MCF 10A (cell line): ENCODE measurements at regions of chr2 and their contacts with region 1.

Region 1: DNA sequence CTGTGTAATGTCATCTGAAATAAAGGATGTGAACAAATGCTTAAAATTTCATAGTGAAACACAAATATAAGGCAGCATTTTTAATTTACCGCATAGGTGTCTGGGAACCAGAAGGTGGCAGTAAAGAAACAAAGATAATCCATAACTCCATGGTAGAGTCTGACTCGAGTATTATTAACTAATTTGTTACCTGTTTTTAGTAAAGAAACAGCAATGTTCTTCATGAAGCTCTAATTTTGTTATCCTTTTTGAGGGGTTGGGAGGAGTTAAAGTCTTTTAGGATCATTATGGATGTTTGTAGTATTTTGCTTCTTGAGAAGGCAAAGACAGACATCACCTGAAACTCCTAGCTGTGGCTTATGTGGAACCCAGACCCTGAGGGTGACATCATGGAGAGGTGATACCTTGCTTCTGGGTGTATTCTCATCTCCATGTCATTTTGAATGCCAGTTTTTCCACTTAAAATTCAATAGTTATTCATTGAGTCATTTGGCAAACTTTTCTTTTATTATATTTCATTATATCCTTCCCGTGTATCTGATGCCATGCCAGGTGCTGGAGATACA is 286.2 kb upstream of the EPAS1 start:
- DNase-seq: peak; percentile 50
- H3K4me3 Mint-ChIP-seq: no peak overlapping the region
- H3K27ac Mint-ChIP-seq: no peak overlapping the region
- H3K4me1 Mint-ChIP-seq: no peaks in the 10 kb centered on the region
- H3K27me3 Mint-ChIP-seq: no peaks in the 10 kb centered on the region
- CTCF ChIP-seq: peak; percentile 54

Region 2: GRCh38 chr2:46023165-46023854 is 12.3 kb after region 1 on chr2:
- CTCF ChIA-PET with region 1: interaction called, 10 read pairs
- POLR2A ChIA-PET with region 1: no interaction called
- intact Hi-C with region 1: no loop called
- DNase-seq: no peak
- H3K4me3 Mint-ChIP-seq: no peak overlapping the region
- H3K27ac Mint-ChIP-seq: no peak overlapping the region
- H3K4me1 Mint-ChIP-seq: no peaks in the 10 kb centered on the region
- H3K27me3 Mint-ChIP-seq: no peaks in the 10 kb centered on the region
- CTCF ChIP-seq: no peak

Region 3: GRCh38 chr2:46364797-46365457 is 353.9 kb after region 1 on chr2:
- CTCF ChIA-PET with region 1: interaction called, 15 read pairs
- POLR2A ChIA-PET with region 1: interaction called, 3 read pairs
- intact Hi-C with region 1: loop called (anchors 1 kb)
- DNase-seq: peak; percentile 67
- H3K4me3 Mint-ChIP-seq: no peak overlapping the region
- H3K27ac Mint-ChIP-seq: no peak overlapping the region
- H3K4me1 Mint-ChIP-seq: peaks cover 9% of the 10 kb centered on the region
- H3K27me3 Mint-ChIP-seq: no peaks in the 10 kb centered on the region
- CTCF ChIP-seq: peak; percentile 73

Region 4: DNA sequence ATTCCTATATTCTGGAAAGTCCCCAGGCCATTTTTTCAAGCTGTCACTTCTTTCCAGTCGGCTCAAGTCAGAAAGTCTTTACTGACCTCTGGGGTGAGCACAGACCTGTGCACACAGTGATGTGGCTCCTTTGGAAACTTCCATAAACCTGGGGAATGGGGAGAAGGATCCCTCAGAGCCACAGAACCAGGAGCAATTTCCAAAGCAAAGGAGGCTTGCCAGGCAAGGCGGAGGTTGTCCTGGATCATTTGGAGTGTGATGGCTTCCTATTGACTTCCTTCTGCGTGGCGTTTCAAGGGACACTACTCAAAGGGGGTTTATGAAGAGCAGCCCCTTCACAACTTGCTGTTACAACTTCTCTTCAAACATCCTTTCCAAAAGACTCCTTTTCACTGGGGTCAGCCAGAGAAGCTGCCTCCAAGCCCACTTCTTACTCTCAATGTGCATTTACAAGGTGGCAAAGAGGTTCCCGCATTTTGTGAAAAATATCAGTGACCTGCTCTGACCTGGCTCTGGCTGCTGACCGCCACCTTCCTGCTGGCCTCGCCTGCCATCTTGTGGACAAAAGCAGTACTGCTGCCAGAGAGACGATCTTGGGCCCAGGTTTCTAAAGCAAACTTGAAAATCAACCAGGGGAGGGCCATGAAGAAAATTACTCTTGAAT is 450.1 kb after region 1 on chr2:
- CTCF ChIA-PET with region 1: interaction called, 21 read pairs
- POLR2A ChIA-PET with region 1: no interaction called
- intact Hi-C with region 1: loop called (anchors 1 kb)
- DNase-seq: peak; percentile 68
- H3K4me3 Mint-ChIP-seq: no peak overlapping the region
- H3K27ac Mint-ChIP-seq: peak overlapping the region; percentile 33
- H3K4me1 Mint-ChIP-seq: peaks cover 6% of the 10 kb centered on the region
- H3K27me3 Mint-ChIP-seq: no peaks in the 10 kb centered on the region
- CTCF ChIP-seq: peak; percentile 99

Region 5: DNA sequence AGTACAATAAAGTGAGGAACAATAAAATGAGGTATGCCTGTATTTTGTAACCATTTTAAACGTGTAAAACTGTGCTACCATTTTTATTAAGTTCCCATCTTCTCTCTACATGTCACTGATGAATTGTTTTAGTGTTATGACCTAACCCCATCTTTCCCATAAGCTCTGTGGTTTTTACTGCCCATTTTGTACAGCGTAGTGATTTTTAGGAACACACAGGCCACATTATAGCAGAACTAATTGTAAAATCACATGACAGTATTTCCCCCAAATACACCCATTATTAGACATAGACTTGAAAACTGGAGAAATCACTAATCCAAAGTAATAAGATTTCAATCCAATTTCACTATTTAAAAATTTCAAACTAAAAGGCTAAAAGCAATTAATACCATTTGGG is 599.0 kb after region 1 on chr2:
- CTCF ChIA-PET with region 1: no interaction called
- POLR2A ChIA-PET with region 1: no interaction called
- intact Hi-C with region 1: loop called (anchors 5 kb)
- DNase-seq: no peak
- H3K4me3 Mint-ChIP-seq: no peak overlapping the region
- H3K27ac Mint-ChIP-seq: no peak overlapping the region
- H3K4me1 Mint-ChIP-seq: no peaks in the 10 kb centered on the region
- H3K27me3 Mint-ChIP-seq: no peaks in the 10 kb centered on the region
- CTCF ChIP-seq: no peak